ENCODE measurements at regions of chr16 and their contacts with region 1.

Region 1: GRCh38 chr16:87047221-87048037 is 269.8 kb downstream of the C16orf95 start:
- DNase-seq: no peak
- H3K4me3 ChIP-seq: no peak overlapping the region
- H3K27ac ChIP-seq: no peak overlapping the region
- H3K4me1 ChIP-seq: no peaks in the 10 kb centered on the region
- H3K27me3 ChIP-seq: peaks cover 2% of the 10 kb centered on the region
- CTCF ChIP-seq: no peak

Region 2: DNA sequence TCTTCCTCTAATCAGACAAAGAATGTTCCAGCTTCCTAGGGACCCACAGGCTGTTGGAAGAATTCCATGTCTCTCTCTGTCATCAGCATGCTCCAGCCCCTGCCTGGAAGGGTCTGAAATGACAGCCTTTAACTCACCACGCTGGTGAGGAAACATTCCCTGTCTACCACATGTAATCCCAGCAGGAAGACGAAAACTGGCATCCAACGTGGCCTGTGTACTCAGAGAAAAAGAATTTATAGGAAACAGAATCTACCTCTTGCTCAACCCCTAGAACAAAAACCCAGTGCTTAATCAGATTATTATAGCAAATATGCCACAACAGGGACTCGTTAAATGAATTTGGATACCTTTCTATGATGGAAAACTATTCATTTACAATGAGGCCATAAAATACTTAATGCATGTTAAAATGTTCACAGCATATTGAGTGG is 684.4 kb before region 1 on chr16:
- CTCF ChIA-PET with region 1: no interaction called
- dilution Hi-C with region 1: no loop called
- in situ Hi-C with region 1: no loop called
- intact Hi-C with region 1: no loop called
- DNase-seq: peak; percentile 55
- H3K4me3 ChIP-seq: no peak overlapping the region
- H3K27ac ChIP-seq: no peak overlapping the region
- H3K4me1 ChIP-seq: no peaks in the 10 kb centered on the region
- H3K27me3 ChIP-seq: no peaks in the 10 kb centered on the region
- CTCF ChIP-seq: no peak

Region 3: DNA sequence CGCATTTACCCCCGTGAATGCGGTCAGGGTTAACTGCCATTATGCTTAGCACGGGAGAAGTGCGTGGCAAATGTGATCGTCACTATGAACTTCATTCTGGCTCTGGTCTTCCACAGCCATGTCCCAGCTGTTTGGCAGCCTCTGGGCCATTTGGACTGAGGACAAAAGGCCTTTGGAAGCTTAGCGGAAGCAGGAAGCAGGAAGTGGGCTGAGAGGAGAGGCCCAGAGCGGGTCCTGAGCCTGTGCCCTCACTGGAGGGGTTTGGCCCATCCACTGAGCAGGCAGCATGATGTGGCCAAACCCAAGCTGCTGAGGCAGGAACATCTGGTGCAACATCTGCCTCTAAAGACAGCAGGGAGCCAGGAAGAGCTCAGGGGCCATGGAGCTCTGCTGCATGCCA is 76.2 kb before region 1 on chr16:
- CTCF ChIA-PET with region 1: no interaction called
- dilution Hi-C with region 1: loop called (anchors 5 kb)
- in situ Hi-C with region 1: no loop called
- intact Hi-C with region 1: no loop called
- DNase-seq: no peak
- H3K4me3 ChIP-seq: no peak overlapping the region
- H3K27ac ChIP-seq: no peak overlapping the region
- H3K4me1 ChIP-seq: peaks cover 3% of the 10 kb centered on the region
- H3K27me3 ChIP-seq: no peaks in the 10 kb centered on the region
- CTCF ChIP-seq: no peak

Region 4: DNA sequence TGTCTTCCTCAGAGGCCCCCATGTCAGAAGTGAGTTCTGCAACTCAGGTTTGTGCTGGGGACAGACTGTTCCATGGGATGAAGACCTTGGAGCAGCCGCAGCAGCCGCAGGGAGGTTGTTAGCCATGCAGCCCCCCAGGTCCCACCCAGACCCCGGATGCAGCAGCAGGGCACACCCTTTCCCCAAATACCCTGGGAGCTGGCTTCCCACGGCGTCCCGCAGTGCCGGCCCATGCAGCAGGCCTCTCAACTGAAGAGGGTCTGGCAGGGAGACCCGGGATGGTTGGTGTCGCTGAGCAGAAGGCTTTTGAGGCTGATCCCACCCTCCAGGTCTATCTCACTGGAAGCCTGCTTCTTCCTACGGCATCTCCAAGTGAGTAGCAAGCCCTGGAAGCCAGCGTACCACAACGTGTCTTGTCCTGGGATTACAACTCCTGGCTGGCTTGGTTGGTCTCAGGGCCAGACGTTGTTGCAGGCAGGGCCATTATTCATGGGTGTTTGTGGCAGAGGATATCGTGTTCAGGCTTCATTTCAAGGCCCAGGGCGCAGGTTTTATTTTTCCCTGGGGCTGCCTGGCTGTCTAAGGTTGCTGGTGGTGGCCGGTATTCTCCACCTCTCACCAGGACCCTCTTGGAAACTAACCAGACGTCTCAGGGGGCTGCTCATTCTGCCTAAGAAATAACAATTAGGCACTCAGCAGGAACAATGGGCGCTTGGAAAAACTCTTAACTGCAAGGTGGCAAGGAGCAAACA is 46.6 kb after region 1 on chr16:
- CTCF ChIA-PET with region 1: no interaction called
- dilution Hi-C with region 1: loop called (anchors 5 kb)
- in situ Hi-C with region 1: no loop called
- intact Hi-C with region 1: no loop called
- DNase-seq: no peak
- H3K4me3 ChIP-seq: no peak overlapping the region
- H3K27ac ChIP-seq: no peak overlapping the region
- H3K4me1 ChIP-seq: no peaks in the 10 kb centered on the region
- H3K27me3 ChIP-seq: peaks cover 2% of the 10 kb centered on the region
- CTCF ChIP-seq: no peak

Region 5: GRCh38 chr16:87263471-87263961 is 216.1 kb after region 1 on chr16:
- CTCF ChIA-PET with region 1: no interaction called
- dilution Hi-C with region 1: no loop called
- in situ Hi-C with region 1: no loop called
- intact Hi-C with region 1: no loop called
- DNase-seq: no peak
- H3K4me3 ChIP-seq: no peak overlapping the region
- H3K27ac ChIP-seq: no peak overlapping the region
- H3K4me1 ChIP-seq: no peaks in the 10 kb centered on the region
- H3K27me3 ChIP-seq: no peaks in the 10 kb centered on the region
- CTCF ChIP-seq: no peak